ENCODE measurements at regions of chr1 and their contacts with region 1.

Region 1: GRCh38 chr1:8506995-8507615 is 189.2 kb downstream of the SLC45A1 start:
- DNase-seq: no peak
- ATAC-seq: peak in 1 of 4 donors; percentile 29
- H3K4me3 ChIP-seq: no peak overlapping the region
- H3K27ac ChIP-seq: no peak overlapping the region
- H3K4me1 ChIP-seq: peaks cover 2 to 35% (median 23%) of the 10 kb centered on the region in 12 donors
- H3K27me3 ChIP-seq: no peaks in the 10 kb centered on the region
- CTCF ChIP-seq: no peak
- POLR2A ChIP-seq: no peak

Region 2: DNA sequence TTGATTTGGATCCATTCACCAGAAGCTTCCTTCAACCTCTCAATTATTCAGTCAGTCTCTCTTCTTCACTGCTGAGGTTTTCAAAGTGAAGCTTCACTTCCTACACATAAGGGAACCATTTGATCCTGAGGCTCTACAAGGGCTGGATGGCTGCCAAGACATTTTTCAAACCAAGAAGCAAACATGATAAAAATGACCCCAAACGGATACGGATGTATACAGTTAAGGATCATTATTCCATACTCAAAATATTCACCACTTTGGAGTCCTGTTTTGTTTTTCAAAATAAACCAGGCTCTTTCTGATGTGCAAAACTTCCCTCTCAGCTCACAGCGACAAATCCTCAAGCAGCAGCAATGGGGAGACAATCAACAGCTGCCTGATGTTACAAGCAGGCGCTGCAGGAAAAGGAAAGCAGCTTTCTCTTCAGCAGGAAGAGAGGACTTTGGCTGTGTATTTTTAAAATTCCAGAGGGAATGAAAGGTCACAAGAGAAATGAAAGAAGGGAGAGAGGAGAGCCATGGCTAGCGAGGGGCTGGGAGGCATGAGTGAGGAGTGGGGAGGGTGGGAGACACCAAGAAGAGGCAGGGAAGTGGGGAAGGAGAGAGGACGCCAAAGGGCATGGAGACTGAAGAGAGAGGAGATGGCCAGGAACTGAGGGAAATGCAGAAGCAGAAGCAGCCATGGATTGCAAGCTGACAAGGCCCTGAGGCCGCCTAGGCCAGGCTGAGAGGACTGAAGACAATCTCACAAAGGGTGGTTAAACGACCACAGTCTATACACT is 43.8 kb before region 1 on chr1:
- intact Hi-C with region 1: loop called in 1 of 10 experiments (anchors 5 kb)
- DNase-seq: peak in 3 of 5 donors; percentile 50 to 66 (median 54)
- ATAC-seq: peak; percentile 53 to 72 (median 64)
- H3K4me3 ChIP-seq: peak overlapping the region in 6 of 12 donors; percentile 1 to 17 (median 8)
- H3K27ac ChIP-seq: peak overlapping the region; percentile 42 to 89 (median 80)
- H3K4me1 ChIP-seq: peaks cover 4 to 59% (median 40%) of the 10 kb centered on the region in 12 donors
- H3K27me3 ChIP-seq: no peaks in the 10 kb centered on the region
- CTCF ChIP-seq: no peak
- POLR2A ChIP-seq: no peak